ENCODE measurements at regions of chr10 and their contacts with region 1.

Region 1: DNA sequence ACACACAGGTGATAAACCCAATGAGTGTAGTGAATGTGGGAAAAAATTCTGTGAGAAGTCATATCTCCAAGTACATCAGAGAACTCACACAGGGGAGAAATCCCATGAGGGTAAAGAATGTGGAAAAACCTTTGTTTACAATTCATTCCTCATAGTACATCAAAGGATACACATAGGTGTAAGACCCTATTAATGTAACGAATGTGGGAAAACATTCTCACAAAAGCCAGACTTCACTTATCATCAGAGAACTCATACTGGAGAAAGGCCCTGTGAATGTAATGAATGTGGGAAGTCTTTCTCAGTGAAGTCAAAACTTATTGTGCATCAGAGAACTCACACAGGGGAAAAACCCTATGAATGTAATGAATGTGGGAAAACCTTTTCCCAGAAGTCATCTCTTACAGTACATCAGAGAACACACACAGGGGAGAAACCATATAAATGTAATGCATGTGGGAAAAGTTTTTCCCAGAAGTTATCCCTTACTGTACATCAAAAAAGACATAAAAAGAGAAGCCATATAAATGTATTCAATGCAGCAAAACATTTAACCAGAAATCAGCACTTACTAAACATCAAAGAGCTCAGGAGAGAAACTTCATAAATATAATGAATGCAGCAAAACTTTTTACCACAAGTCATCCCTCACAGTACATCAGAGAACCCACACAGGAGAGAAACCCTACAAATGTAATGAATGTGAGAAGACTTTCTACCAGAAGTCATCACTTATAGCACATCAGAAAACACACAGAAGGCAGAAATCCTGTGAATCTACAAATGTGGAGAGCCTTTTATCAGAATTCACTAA is 49.8 kb downstream of the ZNF239 start:
- DNase-seq: no peak
- ATAC-seq: no peak
- H3K4me3 Mint-ChIP-seq: no peak overlapping the region
- H3K27ac Mint-ChIP-seq: no peak overlapping the region
- H3K4me1 Mint-ChIP-seq: no peaks in the 10 kb centered on the region
- H3K27me3 Mint-ChIP-seq: no peaks in the 10 kb centered on the region

Region 2: DNA sequence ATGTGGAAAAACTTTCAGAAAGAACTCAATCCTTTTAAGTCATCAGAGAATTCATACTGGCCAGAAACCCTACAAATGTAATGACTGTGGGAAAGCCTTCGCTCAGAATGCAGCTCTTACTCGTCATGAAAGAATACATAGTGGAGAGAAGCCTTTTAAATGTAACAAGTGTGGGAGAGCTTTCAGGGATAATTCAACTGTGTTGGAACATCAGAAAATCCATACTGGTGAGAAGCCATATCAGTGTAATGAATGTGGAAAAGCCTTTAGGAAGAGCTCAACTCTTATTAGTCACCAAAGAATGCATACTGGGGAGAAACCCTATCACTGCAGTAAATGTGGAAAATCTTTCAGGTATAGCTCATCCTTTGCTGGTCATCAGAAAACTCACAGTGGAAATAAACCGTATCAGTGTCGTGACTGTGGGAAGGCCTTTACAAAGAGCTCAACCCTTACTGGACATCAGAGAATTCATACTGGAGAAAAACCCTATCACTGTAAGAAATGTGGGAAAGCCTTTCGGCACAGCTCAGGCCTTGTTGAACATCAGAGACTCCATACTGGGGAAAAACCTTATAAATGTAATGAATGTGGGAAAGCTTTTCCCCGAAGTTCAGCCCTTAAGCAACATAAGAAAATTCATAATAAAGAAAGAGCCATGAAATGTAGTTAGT is 92.2 kb after region 1 on chr10:
- CTCF ChIA-PET with region 1: no interaction called
- POLR2A ChIA-PET with region 1: no interaction called
- intact Hi-C with region 1: loop called in 1 of 2 experiments (anchors 5 kb)
- DNase-seq: no peak
- ATAC-seq: no peak
- H3K4me3 Mint-ChIP-seq: no peak overlapping the region
- H3K27ac Mint-ChIP-seq: no peak overlapping the region
- H3K4me1 Mint-ChIP-seq: peaks cover 6% of the 10 kb centered on the region
- H3K27me3 Mint-ChIP-seq: no peaks in the 10 kb centered on the region

Measured in activated CD4-positive, alpha-beta T cell treated with anti-CD3 and anti-CD28 coated beads for 36 hours (primary cell).